ENCODE measurements at regions of chr1 and their contacts with region 1.

Region 1: DNA sequence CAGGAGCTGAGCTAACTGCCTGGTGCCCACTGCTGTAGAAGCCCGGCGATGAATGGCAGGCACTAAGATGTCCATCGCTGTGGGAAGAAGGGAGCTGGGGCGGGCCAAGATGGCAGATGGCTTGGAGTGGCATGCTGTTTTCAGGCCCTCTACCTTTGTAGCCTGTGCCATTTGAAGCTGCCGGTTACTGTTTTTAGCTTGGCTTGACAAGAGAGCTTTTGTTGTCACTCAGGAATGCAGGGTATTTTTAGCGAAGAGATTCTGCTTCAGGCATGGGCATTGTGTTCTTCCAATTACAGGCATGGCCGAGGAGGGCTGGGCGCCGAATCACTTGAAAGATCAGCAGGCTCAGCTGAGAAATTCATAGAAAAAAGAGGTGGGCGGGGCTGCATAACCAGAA is 348.7 kb downstream of the RPS6KC1 start:
- DNase-seq: peak; percentile 10
- H3K4me3 ChIP-seq: no peak overlapping the region
- H3K27ac ChIP-seq: no peak overlapping the region
- H3K4me1 ChIP-seq: no peaks in the 10 kb centered on the region
- H3K27me3 ChIP-seq: peaks cover 2% of the 10 kb centered on the region
- CTCF ChIP-seq: no peak

Region 2: GRCh38 chr1:213315571-213315970 is 84.1 kb before region 1 on chr1:
- CTCF ChIA-PET with region 1: no interaction called
- dilution Hi-C with region 1: no loop called
- in situ Hi-C with region 1: no loop called
- intact Hi-C with region 1: no loop called
- DNase-seq: no peak
- H3K4me3 ChIP-seq: no peak overlapping the region
- H3K27ac ChIP-seq: no peak overlapping the region
- H3K4me1 ChIP-seq: no peaks in the 10 kb centered on the region
- H3K27me3 ChIP-seq: no peaks in the 10 kb centered on the region
- CTCF ChIP-seq: no peak

Region 3: GRCh38 chr1:213457097-213457680 is 57.5 kb after region 1 on chr1:
- CTCF ChIA-PET with region 1: no interaction called
- dilution Hi-C with region 1: loop called (anchors 10 kb)
- in situ Hi-C with region 1: no loop called
- intact Hi-C with region 1: no loop called
- DNase-seq: no peak
- H3K4me3 ChIP-seq: no peak overlapping the region
- H3K27ac ChIP-seq: no peak overlapping the region
- H3K4me1 ChIP-seq: no peaks in the 10 kb centered on the region
- H3K27me3 ChIP-seq: peaks cover 3% of the 10 kb centered on the region
- CTCF ChIP-seq: no peak

Region 4: DNA sequence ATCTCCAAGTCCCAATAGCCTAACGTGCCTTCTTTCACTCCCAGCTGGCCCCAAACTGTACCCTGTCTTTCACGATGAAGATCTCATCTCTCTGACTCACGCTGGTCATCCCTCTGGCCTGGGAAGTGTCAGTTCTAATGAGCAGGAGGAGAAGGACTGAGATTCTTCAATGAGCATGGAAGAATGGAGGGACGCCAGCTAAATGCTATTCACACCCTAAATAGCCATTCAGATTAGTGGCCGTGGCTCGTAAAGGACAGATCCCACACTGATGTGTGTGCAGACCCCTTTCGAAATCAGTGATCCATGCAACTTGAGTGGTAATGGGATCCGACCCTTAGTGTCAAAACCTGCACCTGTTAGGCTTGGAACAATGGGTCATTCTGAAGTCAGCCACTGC is 805.4 kb after region 1 on chr1:
- CTCF ChIA-PET with region 1: no interaction called
- dilution Hi-C with region 1: loop called (anchors 10 kb)
- in situ Hi-C with region 1: no loop called
- intact Hi-C with region 1: no loop called
- DNase-seq: no peak
- H3K4me3 ChIP-seq: no peak overlapping the region
- H3K27ac ChIP-seq: no peak overlapping the region
- H3K4me1 ChIP-seq: no peaks in the 10 kb centered on the region
- H3K27me3 ChIP-seq: no peaks in the 10 kb centered on the region
- CTCF ChIP-seq: no peak

Measured in mammary epithelial cell (primary cell).